GM10248 (cell line): ENCODE measurements at regions of chr2 and their contacts with region 1.

Region 1: DNA sequence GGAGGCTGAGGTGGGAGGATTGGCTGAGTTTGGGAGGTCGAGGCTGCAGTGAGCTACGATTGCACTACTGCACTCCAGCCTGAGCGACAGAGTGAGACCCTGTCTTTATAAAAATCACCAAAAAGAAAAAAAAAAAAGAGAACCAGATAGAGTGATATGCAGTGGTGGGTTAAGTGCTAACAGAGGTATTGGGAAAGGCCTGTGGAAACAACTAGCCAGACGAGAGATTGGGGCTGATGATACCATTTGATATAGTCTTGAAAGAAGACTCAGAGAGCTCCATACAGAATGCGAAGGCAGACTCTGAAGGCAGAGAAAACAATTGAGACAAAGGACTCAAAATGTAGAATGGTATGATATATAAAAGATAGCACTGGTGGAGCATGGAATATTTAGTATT is 134.1 kb downstream of the CDC42EP3 start:
- DNase-seq: no peak
- CTCF ChIP-seq: no peak

Region 2: GRCh38 chr2:37523814-37524362 is 13.4 kb before region 1 on chr2:
- CTCF ChIA-PET with region 1: interaction called, 13 read pairs
- POLR2A ChIA-PET with region 1: no interaction called
- DNase-seq: no peak
- CTCF ChIP-seq: no peak

Region 3: GRCh38 chr2:37711308-37711731 is 174.0 kb after region 1 on chr2:
- CTCF ChIA-PET with region 1: no interaction called
- POLR2A ChIA-PET with region 1: no interaction called
- DNase-seq: no peak
- CTCF ChIP-seq: no peak

Region 4: GRCh38 chr2:37730037-37730818 is 192.9 kb after region 1 on chr2:
- CTCF ChIA-PET with region 1: no interaction called
- POLR2A ChIA-PET with region 1: no interaction called
- DNase-seq: no peak
- CTCF ChIP-seq: no peak